ENCODE measurements at regions of chr4 and their contacts with region 1.

Region 1: DNA sequence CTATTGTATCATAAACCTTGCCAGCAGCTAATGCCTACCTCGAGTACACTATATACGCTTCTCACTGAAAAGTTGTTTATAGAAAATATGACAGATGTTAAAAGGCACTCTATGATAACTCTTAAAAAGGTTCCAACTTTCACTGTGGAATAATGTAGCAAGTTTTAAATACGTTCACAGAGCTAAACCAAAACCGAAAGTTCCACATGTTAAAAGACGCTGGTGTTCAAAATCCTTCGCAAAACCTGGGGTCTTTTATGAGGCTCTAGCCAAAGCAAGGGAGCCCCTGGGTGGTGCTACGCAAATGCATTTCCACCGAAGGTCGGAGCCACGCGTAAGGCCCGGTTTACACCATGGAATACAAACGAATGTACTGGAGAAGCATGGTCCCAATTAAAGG is 103.7 kb upstream of the TENM3 start:
- DNase-seq: no peak
- H3K4me3 Mint-ChIP-seq: no peak overlapping the region
- H3K27ac Mint-ChIP-seq: no peak overlapping the region
- H3K4me1 Mint-ChIP-seq: peaks cover 8% of the 10 kb centered on the region
- H3K27me3 Mint-ChIP-seq: no peaks in the 10 kb centered on the region
- CTCF ChIP-seq: no peak

Region 2: DNA sequence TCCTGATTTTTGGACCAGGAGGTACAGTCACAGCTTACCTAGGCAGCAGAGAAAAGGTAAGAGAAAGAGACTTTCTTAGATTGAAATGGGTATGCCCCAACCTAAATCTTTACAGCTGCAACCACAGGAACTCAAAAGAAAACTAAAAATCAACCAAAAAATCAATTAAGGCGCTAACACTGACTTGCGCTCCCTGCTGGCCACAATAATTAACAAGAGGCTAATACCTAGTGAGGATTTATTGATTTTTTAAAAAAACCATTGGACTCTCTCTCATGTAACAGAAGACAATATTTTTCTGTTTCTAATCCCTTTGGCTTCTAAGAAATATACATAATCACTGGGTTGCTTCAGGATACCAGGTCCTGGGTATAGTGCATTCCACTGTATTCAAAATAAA is 50.2 kb before region 1 on chr4:
- CTCF ChIA-PET with region 1: no interaction called
- intact Hi-C with region 1: loop called (anchors 2 kb)
- DNase-seq: peak; percentile 45
- H3K4me3 Mint-ChIP-seq: no peak overlapping the region
- H3K27ac Mint-ChIP-seq: no peak overlapping the region
- H3K4me1 Mint-ChIP-seq: no peaks in the 10 kb centered on the region
- H3K27me3 Mint-ChIP-seq: no peaks in the 10 kb centered on the region
- CTCF ChIP-seq: peak; percentile 30

Region 3: GRCh38 chr4:182679533-182679932 is 540.0 kb after region 1 on chr4:
- CTCF ChIA-PET with region 1: interaction called, 14 read pairs
- intact Hi-C with region 1: no loop called
- DNase-seq: no peak
- H3K4me3 Mint-ChIP-seq: no peak overlapping the region
- H3K27ac Mint-ChIP-seq: no peak overlapping the region
- H3K4me1 Mint-ChIP-seq: no peaks in the 10 kb centered on the region
- H3K27me3 Mint-ChIP-seq: no peaks in the 10 kb centered on the region
- CTCF ChIP-seq: no peak

Measured in Calu3 (cell line).